Activated CD8-positive, alpha-beta T cell treated with anti-CD3 and anti-CD28 coated beads, Interleukin-2, amount 10 ng/mL, durations not matched to agents 7 days and 5 days (primary cell): ENCODE measurements at regions of chr2 and their contacts with region 1.

Region 1: GRCh38 chr2:148658807-148659722 is 14.5 kb downstream of the EPC2 start:
- DNase-seq: no peak
- ATAC-seq: peak; percentile 85
- H3K4me3 Mint-ChIP-seq: no peak overlapping the region
- H3K27ac Mint-ChIP-seq: peak overlapping the region; percentile 14
- H3K4me1 Mint-ChIP-seq: peaks cover 51% of the 10 kb centered on the region
- H3K27me3 Mint-ChIP-seq: no peaks in the 10 kb centered on the region

Region 2: GRCh38 chr2:148644883-148645538 is 14.1 kb before region 1 on chr2:
- CTCF ChIA-PET with region 1: interaction called, 5 read pairs
- POLR2A ChIA-PET with region 1: interaction called, 10 read pairs
- DNase-seq: peak; percentile 94
- ATAC-seq: peak; percentile 78
- H3K4me3 Mint-ChIP-seq: peak overlapping the region; percentile 87
- H3K27ac Mint-ChIP-seq: peak overlapping the region; percentile 97
- H3K4me1 Mint-ChIP-seq: peaks cover 31% of the 10 kb centered on the region
- H3K27me3 Mint-ChIP-seq: peaks cover 21% of the 10 kb centered on the region